ENCODE measurements at regions of chr2 and their contacts with region 1.

Region 1: DNA sequence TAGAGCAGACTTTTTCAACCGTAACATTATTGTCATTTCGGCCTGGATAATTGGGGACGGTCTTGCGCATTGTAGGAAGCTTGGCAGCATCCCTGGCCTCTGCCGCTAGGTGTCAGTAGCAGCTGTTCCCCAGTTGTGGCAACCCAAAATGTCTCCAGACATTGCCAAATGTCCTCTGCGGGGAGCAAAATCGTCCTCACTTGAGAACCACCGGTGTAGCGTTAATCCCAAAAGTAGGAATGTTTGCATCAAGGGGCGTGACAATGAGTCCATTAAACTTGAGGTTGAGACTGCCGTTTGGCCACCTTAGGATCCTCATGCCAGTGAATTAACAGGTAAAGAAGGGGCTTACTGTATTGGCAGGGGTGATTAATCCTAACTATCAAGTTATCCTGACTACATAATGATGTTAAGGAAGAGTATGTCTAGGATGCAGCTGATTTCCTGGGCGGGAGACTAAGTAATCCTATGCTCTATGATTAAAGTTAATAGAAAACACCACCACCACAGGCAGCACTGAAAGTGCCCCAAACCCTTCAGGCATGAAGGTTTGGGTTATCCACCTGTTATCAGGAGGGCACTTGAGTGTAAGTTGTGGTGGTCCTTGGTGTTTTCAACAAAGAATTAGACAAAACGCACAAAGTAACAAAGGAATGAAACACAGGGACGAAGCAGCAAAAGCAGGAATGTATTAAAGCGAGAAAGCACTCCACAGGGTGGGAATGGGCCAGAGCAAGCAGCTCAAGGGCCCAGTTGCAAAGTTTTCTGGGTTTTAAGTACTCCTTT is 4.9 kb upstream of the ZC3H8 start:
- DNase-seq: peak; percentile 55
- H3K4me3 ChIP-seq: no peak overlapping the region
- H3K27ac ChIP-seq: no peak overlapping the region
- H3K4me1 ChIP-seq: no peaks in the 10 kb centered on the region
- H3K27me3 ChIP-seq: peaks cover 2% of the 10 kb centered on the region
- CTCF ChIP-seq: peak; percentile 98

Region 2: DNA sequence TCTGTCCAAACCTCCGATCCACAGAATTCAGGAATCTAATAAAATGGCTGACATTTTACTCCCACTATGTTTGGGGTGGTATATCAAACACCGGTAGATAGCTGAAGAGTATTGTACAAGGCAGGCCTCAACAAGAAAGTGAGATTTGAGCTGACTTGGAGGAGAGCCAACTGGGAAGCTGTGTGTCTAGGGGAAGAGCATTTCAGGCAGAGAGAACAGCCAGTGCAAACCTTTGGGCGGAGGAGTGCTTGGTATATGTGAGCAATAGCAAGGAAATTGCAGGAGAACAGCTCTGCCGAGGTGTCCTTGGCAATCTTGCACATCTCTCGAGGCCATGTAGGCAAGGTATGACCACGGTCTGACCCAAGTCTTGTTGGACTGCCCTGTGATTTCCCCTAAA is 363.1 kb before region 1 on chr2:
- CTCF ChIA-PET with region 1: no interaction called
- dilution Hi-C with region 1: no loop called
- in situ Hi-C with region 1: no loop called
- intact Hi-C with region 1: no loop called
- DNase-seq: peak; percentile 71
- H3K4me3 ChIP-seq: no peak overlapping the region
- H3K27ac ChIP-seq: no peak overlapping the region
- H3K4me1 ChIP-seq: peaks cover 20% of the 10 kb centered on the region
- H3K27me3 ChIP-seq: peaks cover 17% of the 10 kb centered on the region
- CTCF ChIP-seq: no peak

Region 3: GRCh38 chr2:112121682-112122254 is 137.9 kb before region 1 on chr2:
- CTCF ChIA-PET with region 1: no interaction called
- dilution Hi-C with region 1: no loop called
- in situ Hi-C with region 1: no loop called
- intact Hi-C with region 1: loop called (anchors 2 kb)
- DNase-seq: peak; percentile 7
- H3K4me3 ChIP-seq: no peak overlapping the region
- H3K27ac ChIP-seq: no peak overlapping the region
- H3K4me1 ChIP-seq: no peaks in the 10 kb centered on the region
- H3K27me3 ChIP-seq: no peaks in the 10 kb centered on the region
- CTCF ChIP-seq: peak; percentile 40 to 59

Region 4: GRCh38 chr2:112275306-112275886 is 15.7 kb after region 1 on chr2 and contains the start of gene ZC3H6:
- CTCF ChIA-PET with region 1: no interaction called
- dilution Hi-C with region 1: no loop called
- in situ Hi-C with region 1: no loop called
- intact Hi-C with region 1: loop called (anchors 2 kb)
- DNase-seq: peak; percentile 95
- H3K4me3 ChIP-seq: peak within 1 kb of the TSS; percentile 91 to 99 (median 92)
- H3K27ac ChIP-seq: peak within 1 kb of the TSS; percentile 96
- H3K4me1 ChIP-seq: no peaks in the 10 kb centered on the region
- H3K27me3 ChIP-seq: no peaks in the 10 kb centered on the region
- CTCF ChIP-seq: peak in 1 of 2 donors; percentile 32
- total RNA-seq, gene ZC3H6: 6.0 to 10.6 TPM

Region 5: GRCh38 chr2:112317303-112318158 is 57.8 kb after region 1 on chr2:
- CTCF ChIA-PET with region 1: no interaction called
- dilution Hi-C with region 1: no loop called
- in situ Hi-C with region 1: no loop called
- intact Hi-C with region 1: no loop called
- DNase-seq: no peak
- H3K4me3 ChIP-seq: no peak overlapping the region
- H3K27ac ChIP-seq: no peak overlapping the region
- H3K4me1 ChIP-seq: no peaks in the 10 kb centered on the region
- H3K27me3 ChIP-seq: no peaks in the 10 kb centered on the region
- CTCF ChIP-seq: no peak

Region 6: DNA sequence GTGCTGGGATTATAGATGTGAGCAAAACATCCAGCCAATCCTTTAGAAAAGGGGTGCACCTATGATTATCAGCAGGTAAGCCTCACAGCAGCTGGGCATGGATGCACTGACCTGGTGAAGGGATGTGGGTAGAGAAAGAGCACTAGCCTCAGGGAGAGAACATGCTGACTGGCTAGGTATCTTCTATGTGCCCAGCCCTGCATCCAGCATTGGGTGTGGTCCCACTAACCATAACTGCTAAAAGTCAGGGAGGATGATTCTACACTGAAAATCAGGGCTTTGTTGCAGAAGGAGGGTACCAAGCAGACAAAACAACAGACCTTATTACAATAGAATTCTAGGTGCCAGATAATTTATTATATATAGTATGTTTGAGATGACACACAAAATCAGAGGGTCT is 194.9 kb after region 1 on chr2:
- CTCF ChIA-PET with region 1: no interaction called
- dilution Hi-C with region 1: no loop called
- in situ Hi-C with region 1: loop called in 1 of 2 experiments (anchors 10 kb)
- intact Hi-C with region 1: no loop called
- DNase-seq: no peak
- H3K4me3 ChIP-seq: no peak overlapping the region
- H3K27ac ChIP-seq: no peak overlapping the region
- H3K4me1 ChIP-seq: no peaks in the 10 kb centered on the region
- H3K27me3 ChIP-seq: peaks cover 2% of the 10 kb centered on the region
- CTCF ChIP-seq: no peak